Ascending aorta (tissue), 2 donors: ENCODE measurements at regions of chr10 and their contacts with region 1.

Region 1: GRCh38 chr10:43436400-43437140 is at the start of gene ZNF487:
- DNase-seq: peak; percentile 76 to 95
- H3K4me3 ChIP-seq: peak within 1 kb of the TSS; percentile 77
- H3K27ac ChIP-seq: peak within 1 kb of the TSS; percentile 92 to 97
- H3K4me1 ChIP-seq: peaks cover 0 to 12% of the 10 kb centered on the region in 2 donors
- H3K27me3 ChIP-seq: no peaks in the 10 kb centered on the region
- CTCF ChIP-seq: peak in 1 of 3 experiments; percentile 12
- total RNA-seq, gene ZNF487: 3.9 TPM

Region 2: GRCh38 chr10:43234471-43235041 is 202.0 kb before region 1 on chr10:
- intact Hi-C with region 1: no loop called
- DNase-seq: peak in 1 of 2 donors; percentile 40
- H3K4me3 ChIP-seq: no peak overlapping the region
- H3K27ac ChIP-seq: no peak overlapping the region
- H3K4me1 ChIP-seq: no peaks in the 10 kb centered on the region
- H3K27me3 ChIP-seq: no peaks in the 10 kb centered on the region
- CTCF ChIP-seq: no peak

Region 3: GRCh38 chr10:43420369-43421200 is 16.0 kb before region 1 on chr10:
- intact Hi-C with region 1: loop called (anchors 1 kb)
- DNase-seq: peak; percentile 63 to 94
- H3K4me3 ChIP-seq: peak overlapping the region; percentile 72 to 73
- H3K27ac ChIP-seq: peak overlapping the region; percentile 94 to 95
- H3K4me1 ChIP-seq: peaks cover 0 to 12% of the 10 kb centered on the region in 2 donors
- H3K27me3 ChIP-seq: no peaks in the 10 kb centered on the region
- CTCF ChIP-seq: peak in 1 of 3 experiments; percentile 14